ENCODE measurements at regions of chr10 and their contacts with region 1.

Region 1: GRCh38 chr10:102752934-102753664 is 9.4 kb downstream of the WBP1L start:
- DNase-seq: peak; percentile 34
- ATAC-seq: peak; percentile 76
- H3K4me3 Mint-ChIP-seq: no peak overlapping the region
- H3K27ac Mint-ChIP-seq: no peak overlapping the region
- H3K4me1 Mint-ChIP-seq: peaks cover 48% of the 10 kb centered on the region
- H3K27me3 Mint-ChIP-seq: no peaks in the 10 kb centered on the region
- CTCF ChIP-seq: peak; percentile 50

Region 2: DNA sequence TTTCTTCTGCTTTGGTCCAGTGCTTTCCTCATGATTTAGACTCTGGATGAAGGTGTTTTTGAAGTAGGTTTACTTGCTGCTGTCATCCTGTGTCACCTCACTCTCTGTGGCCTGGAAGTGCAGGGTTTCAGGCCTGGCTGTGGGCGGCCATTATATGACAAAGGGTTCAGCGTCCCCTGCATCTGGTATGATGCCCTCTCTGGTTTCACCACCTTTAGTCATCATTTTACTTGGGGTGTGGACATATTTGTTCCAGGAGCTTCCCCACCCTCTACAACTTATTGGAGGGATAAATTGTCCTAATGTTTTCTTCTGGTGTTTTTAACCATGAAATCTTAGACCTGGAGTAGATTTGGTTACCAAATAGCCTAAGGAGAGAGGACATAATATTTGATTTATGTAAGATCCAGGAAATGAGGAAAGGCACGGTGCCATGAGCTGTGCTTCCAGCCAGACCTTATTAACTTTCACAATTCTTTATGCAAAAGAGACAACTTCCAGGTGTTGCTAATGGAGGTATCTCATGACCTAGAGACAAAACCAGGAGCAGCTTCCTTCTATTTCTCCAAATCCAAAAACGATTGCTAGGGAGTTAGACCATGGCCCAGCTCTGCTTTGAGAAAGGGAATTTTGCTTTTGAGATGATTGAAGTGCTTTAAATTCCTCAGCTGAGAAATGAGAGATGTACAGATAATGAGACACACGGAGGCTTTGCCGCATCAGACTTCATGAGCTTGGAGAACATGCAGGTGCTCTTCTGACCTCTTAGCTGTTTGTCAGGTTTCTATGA is 11.5 kb after region 1 on chr10:
- CTCF ChIA-PET with region 1: interaction called, 24 read pairs
- POLR2A ChIA-PET with region 1: interaction called, 8 read pairs
- intact Hi-C with region 1: no loop called
- DNase-seq: peak; percentile 23
- ATAC-seq: no peak
- H3K4me3 Mint-ChIP-seq: no peak overlapping the region
- H3K27ac Mint-ChIP-seq: no peak overlapping the region
- H3K4me1 Mint-ChIP-seq: peaks cover 33% of the 10 kb centered on the region
- H3K27me3 Mint-ChIP-seq: no peaks in the 10 kb centered on the region
- CTCF ChIP-seq: no peak

Region 3: GRCh38 chr10:102776779-102777456 is 23.8 kb after region 1 on chr10:
- CTCF ChIA-PET with region 1: interaction called, 24 read pairs
- POLR2A ChIA-PET with region 1: interaction called, 5 read pairs
- intact Hi-C with region 1: no loop called
- DNase-seq: peak; percentile 53
- ATAC-seq: peak; percentile 59
- H3K4me3 Mint-ChIP-seq: peak overlapping the region; percentile 14
- H3K27ac Mint-ChIP-seq: no peak overlapping the region
- H3K4me1 Mint-ChIP-seq: peaks cover 65% of the 10 kb centered on the region
- H3K27me3 Mint-ChIP-seq: no peaks in the 10 kb centered on the region
- CTCF ChIP-seq: no peak

Region 4: GRCh38 chr10:102841827-102842345 is 88.8 kb after region 1 on chr10:
- CTCF ChIA-PET with region 1: no interaction called
- POLR2A ChIA-PET with region 1: no interaction called
- intact Hi-C with region 1: no loop called
- DNase-seq: no peak
- ATAC-seq: no peak
- H3K4me3 Mint-ChIP-seq: no peak overlapping the region
- H3K27ac Mint-ChIP-seq: no peak overlapping the region
- H3K4me1 Mint-ChIP-seq: no peaks in the 10 kb centered on the region
- H3K27me3 Mint-ChIP-seq: no peaks in the 10 kb centered on the region
- CTCF ChIP-seq: no peak

Measured in activated CD8-positive, alpha-beta T cell treated with anti-CD3 and anti-CD28 coated beads for 36 hours (primary cell).